ENCODE measurements at regions of chr2 and their contacts with region 1.

Region 1: GRCh38 chr2:106582148-106583143 is 95.3 kb downstream of the CD8B2 start:
- DNase-seq: peak; percentile 70
- ATAC-seq: peak; percentile 92
- H3K4me3 Mint-ChIP-seq: peak overlapping the region; percentile 79
- H3K27ac Mint-ChIP-seq: peak overlapping the region; percentile 56
- H3K4me1 Mint-ChIP-seq: peaks cover 10% of the 10 kb centered on the region
- H3K27me3 Mint-ChIP-seq: peaks cover 64% of the 10 kb centered on the region

Region 2: DNA sequence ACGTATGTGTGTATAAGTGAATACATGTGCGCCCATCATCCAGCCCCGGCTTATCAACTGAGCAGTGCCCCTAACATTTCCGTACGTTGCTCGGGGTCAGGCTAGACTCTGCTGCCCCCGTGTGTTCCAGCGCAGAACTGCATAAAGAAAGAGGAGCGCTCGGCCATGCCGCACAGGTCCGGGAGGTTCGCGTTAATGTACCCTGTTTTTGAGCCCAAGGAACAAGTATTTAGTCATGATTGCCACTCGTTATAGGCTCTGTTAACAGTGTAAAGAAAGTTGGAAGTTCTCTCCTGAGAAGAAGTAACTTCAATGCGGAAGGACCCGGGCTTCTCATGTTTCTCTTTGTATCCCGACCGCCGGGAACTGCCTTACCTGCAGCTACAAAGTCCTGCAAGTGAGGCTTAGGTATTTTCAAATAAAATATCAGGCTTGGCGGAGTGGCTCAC is 39.6 kb before region 1 on chr2:
- CTCF ChIA-PET with region 1: interaction called, 11 read pairs
- DNase-seq: peak; percentile 78
- ATAC-seq: peak; percentile 90
- H3K4me3 Mint-ChIP-seq: peak overlapping the region; percentile 41
- H3K27ac Mint-ChIP-seq: no peak overlapping the region
- H3K4me1 Mint-ChIP-seq: peaks cover 9% of the 10 kb centered on the region
- H3K27me3 Mint-ChIP-seq: peaks cover 36% of the 10 kb centered on the region

Region 3: DNA sequence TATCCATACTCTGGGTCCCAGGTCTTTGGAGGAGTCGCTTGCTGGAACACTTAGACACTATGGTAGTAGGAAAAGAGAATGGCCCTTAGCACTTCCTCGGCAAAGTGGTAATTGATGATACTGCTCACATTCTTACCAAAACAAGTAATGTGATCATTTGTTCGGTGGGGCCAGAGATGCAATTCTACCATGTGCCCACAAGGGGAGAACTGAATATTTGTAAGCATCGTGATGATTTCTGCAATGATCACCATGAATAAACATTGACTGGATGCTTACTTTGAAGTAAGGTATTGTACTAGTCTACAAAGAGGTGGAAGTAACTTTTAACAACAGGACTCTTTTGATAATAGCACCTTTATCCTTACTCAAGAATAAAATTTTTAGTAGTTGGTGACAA is 14.4 kb after region 1 on chr2:
- CTCF ChIA-PET with region 1: interaction called, 10 read pairs
- DNase-seq: no peak
- ATAC-seq: no peak
- H3K4me3 Mint-ChIP-seq: no peak overlapping the region
- H3K27ac Mint-ChIP-seq: no peak overlapping the region
- H3K4me1 Mint-ChIP-seq: no peaks in the 10 kb centered on the region
- H3K27me3 Mint-ChIP-seq: peaks cover 20% of the 10 kb centered on the region

Region 4: GRCh38 chr2:106624787-106625380 is 42.4 kb after region 1 on chr2:
- CTCF ChIA-PET with region 1: no interaction called
- DNase-seq: no peak
- ATAC-seq: no peak
- H3K4me3 Mint-ChIP-seq: no peak overlapping the region
- H3K27ac Mint-ChIP-seq: no peak overlapping the region
- H3K4me1 Mint-ChIP-seq: no peaks in the 10 kb centered on the region
- H3K27me3 Mint-ChIP-seq: peaks cover 7% of the 10 kb centered on the region